Right ventricle myocardium inferior (tissue), 1 donor: ENCODE measurements at regions of chr15 and their contacts with region 1.

Region 1: DNA sequence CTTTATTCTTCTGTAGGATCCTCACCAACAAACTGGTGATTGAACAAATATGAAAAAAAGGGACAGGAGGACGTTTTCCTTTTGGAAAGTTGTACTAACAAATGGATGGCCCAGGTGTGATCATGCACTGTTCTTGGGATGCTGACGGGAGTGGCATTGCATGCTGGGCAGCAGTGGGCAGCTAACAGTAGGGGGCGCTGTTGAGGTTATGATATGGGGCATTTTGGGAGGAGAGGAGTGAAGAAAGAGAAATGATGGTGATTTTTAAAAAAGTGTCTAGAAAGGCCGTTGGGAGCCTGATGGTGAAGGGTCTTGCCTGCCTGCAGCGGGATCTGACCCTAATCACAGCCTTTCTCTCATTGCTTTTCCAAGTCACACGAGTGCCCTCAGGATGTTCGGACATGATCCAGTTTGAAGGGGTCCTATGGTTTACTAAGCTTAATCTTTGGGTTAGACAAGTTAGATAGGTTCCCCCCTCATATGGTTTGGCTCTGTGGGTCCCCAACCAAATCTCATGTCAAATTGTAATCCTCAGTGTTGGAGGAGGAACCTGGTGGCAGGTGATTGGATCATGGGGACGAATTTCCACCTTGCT is 46.2 kb upstream of the PRTG start:
- DNase-seq: no peak
- ATAC-seq: no peak

Region 2: GRCh38 chr15:55846116-55846707 is 57.0 kb after region 1 on chr15:
- intact Hi-C with region 1: loop called (anchors 5 kb)
- DNase-seq: no peak
- ATAC-seq: peak; percentile 42